H1 (cell line): ENCODE measurements at regions of chr16 and their contacts with region 1.

Region 1: GRCh38 chr16:67595033-67595355 is 32.7 kb downstream of the CTCF start:
- DNase-seq: no peak
- H3K4me3 ChIP-seq: peak overlapping the region in 1 of 4 experiments; percentile 48; a peak in 1 of 8 replicates
- H3K27ac ChIP-seq: no peak overlapping the region; the same call in 1 of the 2 replicates
- H3K4me1 ChIP-seq: peaks cover 0 to 30% (median 12%) of the 10 kb centered on the region in 4 experiments; a peak in 6 of 7 replicates
- H3K27me3 ChIP-seq: no peaks in the 10 kb centered on the region
- CTCF ChIP-seq: no peak
- EP300 ChIP-seq: no peak
- POLR2A ChIP-seq: no peak
- RAD21 ChIP-seq: no peak

Region 2: GRCh38 chr16:67613808-67614207 is 18.8 kb after region 1 on chr16:
- CTCF ChIA-PET with region 1: interaction called, 46 read pairs
- POLR2A ChIA-PET with region 1: no interaction called
- DNase-seq: peak; percentile 15 to 73
- H3K4me3 ChIP-seq: no peak overlapping the region
- H3K27ac ChIP-seq: no peak overlapping the region
- H3K4me1 ChIP-seq: no peaks in the 10 kb centered on the region
- H3K27me3 ChIP-seq: no peaks in the 10 kb centered on the region
- CTCF ChIP-seq: peak; percentile 49 to 73 (median 57)
- EP300 ChIP-seq: no peak
- POLR2A ChIP-seq: no peak
- RAD21 ChIP-seq: peak; percentile 18 to 35; a peak in 3 of 4 replicates